ENCODE measurements at regions of chr6 and their contacts with region 1.

Region 1: GRCh38 chr6:155165029-155165710 is 98.6 kb upstream of the CLDN20 start:
- DNase-seq: no peak
- ATAC-seq: no peak
- H3K4me3 ChIP-seq: no peak overlapping the region
- H3K27ac ChIP-seq: no peak overlapping the region
- H3K4me1 ChIP-seq: peaks cover 8% of the 10 kb centered on the region; the same call in 1 of the 2 replicates
- H3K27me3 ChIP-seq: no peaks in the 10 kb centered on the region
- CTCF ChIP-seq: no peak

Region 2: DNA sequence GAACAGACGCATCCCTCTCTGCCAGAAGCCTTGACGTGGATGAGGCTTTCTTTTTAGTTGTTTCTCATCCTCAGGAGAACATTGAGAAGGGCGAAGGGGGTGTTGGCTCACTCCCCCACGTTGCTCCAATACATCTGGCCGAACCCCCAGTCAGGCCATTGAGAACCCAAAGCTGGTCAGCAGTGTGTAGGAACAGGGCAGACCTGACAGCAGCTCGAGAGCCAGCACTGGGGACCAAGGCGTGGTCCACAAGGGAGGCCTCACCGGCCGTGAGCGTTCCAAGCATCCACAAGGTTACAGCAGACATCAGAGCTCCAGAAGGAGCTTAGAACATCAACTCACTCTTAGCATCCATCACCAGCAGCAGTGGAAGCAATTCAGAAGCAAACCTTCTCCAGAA is 1224.1 kb after region 1 on chr6:
- CTCF ChIA-PET with region 1: no interaction called
- POLR2A ChIA-PET with region 1: interaction called, 17 read pairs
- in situ Hi-C with region 1: no loop called
- intact Hi-C with region 1: no loop called
- DNase-seq: no peak
- ATAC-seq: no peak
- H3K4me3 ChIP-seq: no peak overlapping the region
- H3K27ac ChIP-seq: peak overlapping the region; percentile 20; the same call in 1 of the 2 replicates
- H3K4me1 ChIP-seq: no peaks in the 10 kb centered on the region; the same call in 1 of the 2 replicates
- H3K27me3 ChIP-seq: no peaks in the 10 kb centered on the region
- CTCF ChIP-seq: no peak